ENCODE measurements at regions of chr3 and their contacts with region 1.

Region 1: GRCh38 chr3:159884661-159885402 is 103.8 kb upstream of the IL12A start:
- DNase-seq: peak; percentile 65
- ATAC-seq: peak; percentile 47
- H3K4me3 ChIP-seq: no peak overlapping the region
- H3K27ac ChIP-seq: peak overlapping the region; percentile 63
- H3K4me1 ChIP-seq: peaks cover 16% of the 10 kb centered on the region
- H3K27me3 ChIP-seq: no peaks in the 10 kb centered on the region
- CTCF ChIP-seq: peak; percentile 67
- POLR2A ChIP-seq: no peak
- RAD21 ChIP-seq: peak; percentile 70

Region 2: GRCh38 chr3:159616212-159616825 is 268.5 kb before region 1 on chr3:
- CTCF ChIA-PET with region 1: no interaction called
- POLR2A ChIA-PET with region 1: no interaction called
- dilution Hi-C with region 1: no loop called
- in situ Hi-C with region 1: no loop called
- intact Hi-C with region 1: loop called (anchors 5 kb)
- DNase-seq: peak; percentile 68
- ATAC-seq: peak; percentile 70
- H3K4me3 ChIP-seq: no peak overlapping the region
- H3K27ac ChIP-seq: no peak overlapping the region
- H3K4me1 ChIP-seq: peaks cover 14% of the 10 kb centered on the region
- H3K27me3 ChIP-seq: no peaks in the 10 kb centered on the region
- CTCF ChIP-seq: peak; percentile 67
- POLR2A ChIP-seq: no peak
- RAD21 ChIP-seq: peak; percentile 82

Region 3: GRCh38 chr3:159634483-159634882 is 250.3 kb before region 1 on chr3:
- CTCF ChIA-PET with region 1: no interaction called
- POLR2A ChIA-PET with region 1: no interaction called
- dilution Hi-C with region 1: no loop called
- in situ Hi-C with region 1: no loop called
- intact Hi-C with region 1: no loop called
- DNase-seq: peak; percentile 64
- ATAC-seq: peak; percentile 35; the same call in 1 of the 2 replicates
- H3K4me3 ChIP-seq: no peak overlapping the region
- H3K27ac ChIP-seq: no peak overlapping the region
- H3K4me1 ChIP-seq: peaks cover 12% of the 10 kb centered on the region
- H3K27me3 ChIP-seq: no peaks in the 10 kb centered on the region
- CTCF ChIP-seq: no peak
- POLR2A ChIP-seq: no peak
- RAD21 ChIP-seq: no peak

Region 4: DNA sequence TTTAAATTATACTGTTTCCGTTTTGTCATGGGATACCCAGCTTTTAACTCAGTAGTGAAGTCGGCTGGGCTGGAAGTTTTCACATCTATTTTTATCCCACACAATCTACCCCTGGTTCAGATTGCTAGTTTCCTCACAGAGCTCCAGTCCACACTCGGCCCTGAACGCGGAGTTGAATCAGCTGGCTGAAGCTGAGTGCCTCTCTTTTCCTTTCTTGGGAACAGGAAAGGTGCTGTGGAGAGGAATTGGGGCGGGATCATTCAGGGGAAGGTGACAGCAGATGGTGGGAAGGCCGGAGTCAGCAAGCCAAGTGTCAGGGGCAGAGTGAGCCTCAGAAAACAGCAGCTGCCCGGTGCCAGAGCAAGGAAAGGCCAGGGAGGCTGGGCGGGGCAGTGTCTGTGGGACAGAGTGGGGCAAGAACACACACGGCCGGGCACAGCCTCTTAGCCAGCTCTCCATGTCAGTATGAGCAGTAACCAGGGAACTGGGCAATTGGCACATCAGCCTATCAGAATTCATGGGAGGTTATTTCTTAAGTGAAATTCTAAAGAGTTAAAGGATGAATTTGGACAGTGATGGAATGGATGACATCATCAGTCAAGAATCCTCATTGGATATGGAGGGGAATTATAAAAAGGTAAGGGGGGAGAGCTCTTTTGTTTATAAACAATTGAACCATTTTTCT is 31.9 kb before region 1 on chr3:
- CTCF ChIA-PET with region 1: interaction called, 14 read pairs
- POLR2A ChIA-PET with region 1: no interaction called
- dilution Hi-C with region 1: no loop called
- in situ Hi-C with region 1: no loop called
- intact Hi-C with region 1: no loop called
- DNase-seq: peak; percentile 56
- ATAC-seq: peak; percentile 19
- H3K4me3 ChIP-seq: peak overlapping the region; percentile 21; the same call in 1 of the 2 replicates
- H3K27ac ChIP-seq: peak overlapping the region; percentile 68
- H3K4me1 ChIP-seq: peaks cover 19% of the 10 kb centered on the region
- H3K27me3 ChIP-seq: no peaks in the 10 kb centered on the region
- CTCF ChIP-seq: no peak
- POLR2A ChIP-seq: 0 out of 2 replicates have a peak, but pooled peaks have one; percentile 25
- RAD21 ChIP-seq: no peak

Region 5: GRCh38 chr3:159988617-159989271 is 103.9 kb after region 1 on chr3 and contains the start of gene IL12A:
- CTCF ChIA-PET with region 1: interaction called, 41 read pairs
- POLR2A ChIA-PET with region 1: no interaction called
- dilution Hi-C with region 1: no loop called
- in situ Hi-C with region 1: no loop called
- intact Hi-C with region 1: loop called (anchors 5 kb)
- DNase-seq: peak; percentile 71
- ATAC-seq: peak; percentile 96
- H3K4me3 ChIP-seq: peak within 1 kb of the TSS; percentile 50
- H3K27ac ChIP-seq: peak within 1 kb of the TSS; percentile 5
- H3K4me1 ChIP-seq: peaks cover 11% of the 10 kb centered on the region
- H3K27me3 ChIP-seq: no peaks in the 10 kb centered on the region
- CTCF ChIP-seq: peak; percentile 81
- POLR2A ChIP-seq: no peak
- RAD21 ChIP-seq: peak; percentile 61
- total RNA-seq, gene IL12A: 0.90 and 1.1 TPM in 2 replicates

Region 6: DNA sequence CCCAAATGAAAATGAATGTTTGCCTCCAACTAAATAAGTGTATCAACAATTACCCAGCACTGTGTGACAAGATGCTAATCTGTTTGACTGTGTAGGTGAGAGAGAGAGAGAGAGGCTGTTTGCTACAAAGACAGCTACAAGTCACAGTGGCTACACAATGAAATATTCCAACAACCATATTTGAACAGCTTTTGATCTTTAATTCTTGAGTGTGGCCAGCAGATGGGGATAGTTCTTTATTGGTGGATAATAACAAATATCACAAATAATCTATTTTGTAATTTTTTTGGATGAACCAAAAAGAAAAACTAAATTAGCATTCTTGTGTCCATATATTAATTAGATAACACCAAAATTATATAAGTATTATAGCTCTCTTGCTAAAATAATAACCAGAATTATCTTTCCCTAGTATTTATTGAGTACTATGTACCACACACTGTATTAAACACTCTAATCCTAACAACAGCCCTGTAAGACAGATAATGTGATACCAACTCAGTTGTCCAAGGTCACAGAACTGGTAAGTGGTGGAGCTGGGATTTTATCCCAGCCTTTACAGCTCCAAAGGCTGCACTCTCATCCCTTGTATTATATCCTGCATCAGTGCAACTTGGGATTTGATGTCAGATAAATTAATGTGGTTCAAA is 278.5 kb after region 1 on chr3:
- CTCF ChIA-PET with region 1: no interaction called
- POLR2A ChIA-PET with region 1: no interaction called
- dilution Hi-C with region 1: no loop called
- in situ Hi-C with region 1: loop called (anchors 25 kb)
- intact Hi-C with region 1: loop called (anchors 5 kb)
- DNase-seq: peak; percentile 47
- ATAC-seq: peak; percentile 72
- H3K4me3 ChIP-seq: no peak overlapping the region
- H3K27ac ChIP-seq: no peak overlapping the region
- H3K4me1 ChIP-seq: no peaks in the 10 kb centered on the region
- H3K27me3 ChIP-seq: no peaks in the 10 kb centered on the region
- CTCF ChIP-seq: peak; percentile 74
- POLR2A ChIP-seq: no peak
- RAD21 ChIP-seq: peak; percentile 69

Region 7: GRCh38 chr3:160184655-160185054 is 299.8 kb after region 1 on chr3:
- CTCF ChIA-PET with region 1: no interaction called
- POLR2A ChIA-PET with region 1: no interaction called
- dilution Hi-C with region 1: no loop called
- in situ Hi-C with region 1: no loop called
- intact Hi-C with region 1: no loop called
- DNase-seq: peak; percentile 82
- ATAC-seq: peak; percentile 61
- H3K4me3 ChIP-seq: no peak overlapping the region
- H3K27ac ChIP-seq: peak overlapping the region; percentile 47; the same call in 1 of the 2 replicates
- H3K4me1 ChIP-seq: peaks cover 2% of the 10 kb centered on the region; the same call in 1 of the 2 replicates
- H3K27me3 ChIP-seq: no peaks in the 10 kb centered on the region
- CTCF ChIP-seq: no peak
- POLR2A ChIP-seq: no peak
- RAD21 ChIP-seq: no peak

Region 8: GRCh38 chr3:160399125-160400029 is 514.5 kb after region 1 on chr3 and contains the starts of genes IFT80 and SMC4:
- CTCF ChIA-PET with region 1: no interaction called
- POLR2A ChIA-PET with region 1: no interaction called
- dilution Hi-C with region 1: no loop called
- in situ Hi-C with region 1: loop called (anchors 25 kb)
- intact Hi-C with region 1: no loop called
- DNase-seq: peak; percentile 95
- ATAC-seq: peak; percentile 94
- H3K4me3 ChIP-seq: peak within 1 kb of the TSS; percentile 60
- H3K27ac ChIP-seq: peak within 1 kb of the TSS; percentile 88
- H3K4me1 ChIP-seq: peaks cover 3% of the 10 kb centered on the region; the same call in 1 of the 2 replicates
- H3K27me3 ChIP-seq: no peaks in the 10 kb centered on the region
- CTCF ChIP-seq: no peak
- POLR2A ChIP-seq: peak; percentile 90; the same call in 1 of the 2 replicates
- RAD21 ChIP-seq: no peak
- total RNA-seq, gene IFT80: 16.8 and 36.9 TPM in 2 replicates
- total RNA-seq, gene SMC4: 48.8 and 77.8 TPM in 2 replicates

Measured in IMR-90 (cell line).